Right cardiac atrium (tissue), 5 donors: ENCODE measurements at regions of chr2 and their contacts with region 1.

Region 1: GRCh38 chr2:200703127-200703925 is 108.4 kb upstream of the BZW1 start:
- DNase-seq: no peak
- ATAC-seq: peak; percentile 30 to 48
- H3K4me3 ChIP-seq: no peak overlapping the region
- H3K27ac ChIP-seq: no peak overlapping the region
- H3K4me1 ChIP-seq: no peaks in the 10 kb centered on the region
- H3K27me3 ChIP-seq: no peaks in the 10 kb centered on the region

Region 2: GRCh38 chr2:199979832-199980628 is 723.3 kb before region 1 on chr2:
- intact Hi-C with region 1: loop called in 1 of 4 experiments (anchors 10 kb)
- DNase-seq: peak; percentile 84 to 96 (median 90)
- ATAC-seq: peak; percentile 78 to 86
- H3K4me3 ChIP-seq: no peak overlapping the region
- H3K27ac ChIP-seq: no peak overlapping the region
- H3K4me1 ChIP-seq: no peaks in the 10 kb centered on the region
- H3K27me3 ChIP-seq: no peaks in the 10 kb centered on the region

Region 3: DNA sequence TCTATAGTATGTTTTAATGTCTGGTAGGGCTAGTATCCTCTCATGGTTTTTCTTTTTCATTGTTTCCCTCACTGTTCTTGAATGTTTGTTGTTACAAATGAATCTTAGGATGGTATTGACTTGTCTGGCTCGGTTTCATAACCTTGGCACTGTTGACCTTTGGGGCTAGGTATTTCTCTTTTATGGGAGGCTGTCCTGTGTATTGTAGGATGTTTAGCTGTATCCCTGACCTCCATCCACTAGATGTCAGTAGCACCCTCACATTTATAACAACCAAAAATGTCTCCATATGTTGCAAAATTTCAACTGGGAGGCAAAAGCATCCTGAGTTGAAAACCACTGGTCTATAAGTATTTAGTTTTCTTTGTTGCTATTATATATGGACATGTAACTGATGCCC is 124.5 kb before region 1 on chr2:
- intact Hi-C with region 1: loop called in 3 of 4 experiments (anchors 5 to 10 kb)
- DNase-seq: no peak
- ATAC-seq: peak in 1 of 2 donors; percentile 31
- H3K4me3 ChIP-seq: no peak overlapping the region
- H3K27ac ChIP-seq: no peak overlapping the region
- H3K4me1 ChIP-seq: no peaks in the 10 kb centered on the region
- H3K27me3 ChIP-seq: no peaks in the 10 kb centered on the region

Region 4: GRCh38 chr2:200618587-200619021 is 84.7 kb before region 1 on chr2:
- intact Hi-C with region 1: loop called in 1 of 4 experiments (anchors 5 kb)
- DNase-seq: no peak
- ATAC-seq: peak; percentile 65 to 71
- H3K4me3 ChIP-seq: no peak overlapping the region
- H3K27ac ChIP-seq: no peak overlapping the region
- H3K4me1 ChIP-seq: no peaks in the 10 kb centered on the region
- H3K27me3 ChIP-seq: no peaks in the 10 kb centered on the region